Ovary (tissue), 10 donors: ENCODE measurements at regions of chr7 and their contacts with region 1.

Region 1: GRCh38 chr7:74206589-74207120 is 3.2 kb upstream of the LAT2 start:
- DNase-seq: peak; percentile 78 to 93 (median 89)
- H3K4me3 ChIP-seq: no peak overlapping the region
- H3K27ac ChIP-seq: no peak overlapping the region
- H3K4me1 ChIP-seq: no peaks in the 10 kb centered on the region
- H3K27me3 ChIP-seq: no peaks in the 10 kb centered on the region
- CTCF ChIP-seq: peak; percentile 94 to 99 (median 96)
- EP300 ChIP-seq: no peak
- POLR2A ChIP-seq: no peak

Region 2: DNA sequence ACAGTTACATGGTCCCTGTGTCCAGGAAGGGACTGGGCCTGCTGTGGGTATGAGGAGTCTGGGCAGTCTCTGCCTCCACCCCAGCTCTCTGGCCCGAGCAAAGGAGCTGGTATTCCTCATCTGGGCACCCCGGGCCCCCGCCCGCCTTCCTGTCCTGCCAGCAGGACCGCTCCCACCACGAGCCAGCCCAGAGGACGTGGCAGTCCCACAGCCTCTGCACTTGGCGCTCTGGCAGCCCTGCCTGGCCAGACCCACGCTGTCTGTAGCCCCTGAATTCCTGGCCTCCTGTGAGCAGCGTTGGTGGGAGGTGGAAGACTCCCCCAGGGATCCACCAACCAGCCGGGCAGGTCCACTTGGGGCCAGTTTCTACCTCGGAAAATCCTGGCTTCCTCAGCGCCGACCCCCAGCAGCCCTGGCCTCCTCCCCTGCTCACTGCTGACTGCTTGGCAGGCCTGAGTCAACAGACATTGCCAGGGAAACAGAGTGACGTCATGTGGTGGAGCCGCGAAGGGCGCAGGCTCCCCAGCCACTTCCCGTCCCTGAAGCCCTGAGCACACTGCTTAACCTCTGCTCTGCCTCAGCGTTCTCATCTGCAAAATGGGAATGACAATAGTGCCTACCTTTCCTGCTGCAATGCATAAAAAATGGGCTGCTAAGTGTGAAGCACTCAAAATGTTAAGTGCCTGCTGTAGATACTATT is 144.7 kb before region 1 on chr7:
- intact Hi-C with region 1: loop called in 1 of 4 experiments (anchors 10 kb)
- DNase-seq: peak; percentile 90 to 91 (median 91)
- H3K4me3 ChIP-seq: no peak overlapping the region
- H3K27ac ChIP-seq: peak overlapping the region; percentile 77 to 94
- H3K4me1 ChIP-seq: peaks cover 6% of the 10 kb centered on the region
- H3K27me3 ChIP-seq: no peaks in the 10 kb centered on the region
- CTCF ChIP-seq: no peak
- EP300 ChIP-seq: peak; percentile 12
- POLR2A ChIP-seq: no peak

Region 3: GRCh38 chr7:74068393-74069085 is 138.1 kb before region 1 on chr7:
- intact Hi-C with region 1: loop called in 2 of 4 experiments (anchors 5 to 10 kb)
- DNase-seq: peak in 3 of 5 donors; percentile 43 to 52 (median 44)
- H3K4me3 ChIP-seq: no peak overlapping the region
- H3K27ac ChIP-seq: no peak overlapping the region
- H3K4me1 ChIP-seq: no peaks in the 10 kb centered on the region
- H3K27me3 ChIP-seq: no peaks in the 10 kb centered on the region
- CTCF ChIP-seq: no peak
- EP300 ChIP-seq: no peak
- POLR2A ChIP-seq: no peak